Endothelial cell of umbilical vein (primary cell): ENCODE measurements at regions of chr17 and their contacts with region 1.

Region 1: DNA sequence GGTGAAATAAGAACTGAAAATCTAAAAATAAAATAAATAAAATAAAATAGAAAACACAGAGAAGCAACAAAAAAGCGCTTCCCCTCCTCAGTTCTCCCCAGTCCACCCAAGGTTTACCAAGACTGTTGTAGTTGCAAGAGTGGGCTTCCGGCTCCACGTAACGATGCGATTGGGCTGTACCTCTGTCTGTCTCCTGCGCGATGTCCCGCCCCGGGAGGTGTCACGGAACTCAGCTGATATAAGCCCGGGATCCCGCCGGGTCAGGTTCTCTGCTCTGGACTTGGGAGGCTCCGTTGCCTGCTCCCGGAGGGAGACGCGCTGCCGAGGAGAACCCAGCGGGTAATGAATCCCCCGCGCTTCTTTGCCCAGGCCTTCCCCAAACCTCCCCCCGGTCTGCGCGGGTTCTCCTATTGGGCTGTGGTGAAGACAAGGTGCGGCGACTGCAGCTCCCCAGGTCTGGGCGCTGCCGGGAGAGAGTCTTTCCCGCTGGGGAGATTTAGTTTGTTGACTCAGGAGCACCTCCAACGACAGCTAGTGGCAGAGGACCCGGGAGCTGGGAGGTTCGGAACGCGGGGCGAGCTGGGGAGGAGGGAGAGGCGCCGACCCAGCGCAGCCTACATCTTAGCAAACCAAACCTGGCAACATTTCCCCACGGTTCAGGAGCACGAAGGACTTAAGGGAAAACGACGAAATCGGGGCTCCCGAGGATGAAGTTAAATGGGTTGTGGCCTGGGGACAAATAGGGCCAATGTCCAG is at the start of gene SLFN5:
- DNase-seq: peak; percentile 95
- H3K4me3 ChIP-seq: peak within 1 kb of the TSS; percentile 52 to 68 (median 58)
- H3K27ac ChIP-seq: peak within 1 kb of the TSS; percentile 82
- H3K4me1 ChIP-seq: peaks cover 27% of the 10 kb centered on the region
- H3K27me3 ChIP-seq: peaks cover 0 to 6% of the 10 kb centered on the region in 2 experiments
- CTCF ChIP-seq: no peak
- POLR2A ChIP-seq: peak; percentile 98
- total RNA-seq, gene SLFN5: 15.7 and 24.2 TPM in 2 replicates

Region 2: GRCh38 chr17:34254651-34255380 is 988.2 kb before region 1 on chr17 and contains the start of gene CCL2:
- CTCF ChIA-PET with region 1: no interaction called
- POLR2A ChIA-PET with region 1: no interaction called
- dilution Hi-C with region 1: no loop called
- intact Hi-C with region 1: loop called (anchors 10 kb)
- DNase-seq: peak; percentile 92
- H3K4me3 ChIP-seq: peak within 1 kb of the TSS in 2 of 3 experiments; percentile 43 to 46
- H3K27ac ChIP-seq: peak within 1 kb of the TSS; percentile 96
- H3K4me1 ChIP-seq: peaks cover 78% of the 10 kb centered on the region
- H3K27me3 ChIP-seq: no peaks in the 10 kb centered on the region
- CTCF ChIP-seq: no peak
- POLR2A ChIP-seq: no peak
- total RNA-seq, gene CCL2: 160 and 238 TPM in 2 replicates

Region 3: GRCh38 chr17:35103271-35103670 is 139.7 kb before region 1 on chr17:
- CTCF ChIA-PET with region 1: no interaction called
- POLR2A ChIA-PET with region 1: no interaction called
- dilution Hi-C with region 1: no loop called
- intact Hi-C with region 1: no loop called
- DNase-seq: no peak
- H3K4me3 ChIP-seq: no peak overlapping the region
- H3K27ac ChIP-seq: no peak overlapping the region
- H3K4me1 ChIP-seq: no peaks in the 10 kb centered on the region
- H3K27me3 ChIP-seq: no peaks in the 10 kb centered on the region
- CTCF ChIP-seq: no peak
- POLR2A ChIP-seq: no peak

Region 4: GRCh38 chr17:35141681-35142466 is 101.1 kb before region 1 on chr17 and contains the start of gene NLE1:
- CTCF ChIA-PET with region 1: no interaction called
- POLR2A ChIA-PET with region 1: no interaction called
- dilution Hi-C with region 1: no loop called
- intact Hi-C with region 1: loop called (anchors 5 kb)
- DNase-seq: peak; percentile 80
- H3K4me3 ChIP-seq: peak within 1 kb of the TSS; percentile 77 to 91 (median 79)
- H3K27ac ChIP-seq: no peak within 1 kb of the TSS
- H3K4me1 ChIP-seq: peaks cover 6% of the 10 kb centered on the region
- H3K27me3 ChIP-seq: peaks cover 0 to 2% of the 10 kb centered on the region in 2 experiments
- CTCF ChIP-seq: peak; percentile 95 to 96
- POLR2A ChIP-seq: peak; percentile 73
- total RNA-seq, gene NLE1: 15.8 and 22.8 TPM in 2 replicates

Region 5: GRCh38 chr17:35254107-35254802 is 11.3 kb after region 1 on chr17:
- CTCF ChIA-PET with region 1: interaction called, 10 read pairs
- POLR2A ChIA-PET with region 1: interaction called, 37 read pairs
- dilution Hi-C with region 1: no loop called
- intact Hi-C with region 1: loop called (anchors 1 kb)
- DNase-seq: peak; percentile 98
- H3K4me3 ChIP-seq: no peak overlapping the region
- H3K27ac ChIP-seq: peak overlapping the region; percentile 59
- H3K4me1 ChIP-seq: peaks cover 35% of the 10 kb centered on the region
- H3K27me3 ChIP-seq: no peaks in the 10 kb centered on the region
- CTCF ChIP-seq: no peak
- POLR2A ChIP-seq: no peak

Region 6: DNA sequence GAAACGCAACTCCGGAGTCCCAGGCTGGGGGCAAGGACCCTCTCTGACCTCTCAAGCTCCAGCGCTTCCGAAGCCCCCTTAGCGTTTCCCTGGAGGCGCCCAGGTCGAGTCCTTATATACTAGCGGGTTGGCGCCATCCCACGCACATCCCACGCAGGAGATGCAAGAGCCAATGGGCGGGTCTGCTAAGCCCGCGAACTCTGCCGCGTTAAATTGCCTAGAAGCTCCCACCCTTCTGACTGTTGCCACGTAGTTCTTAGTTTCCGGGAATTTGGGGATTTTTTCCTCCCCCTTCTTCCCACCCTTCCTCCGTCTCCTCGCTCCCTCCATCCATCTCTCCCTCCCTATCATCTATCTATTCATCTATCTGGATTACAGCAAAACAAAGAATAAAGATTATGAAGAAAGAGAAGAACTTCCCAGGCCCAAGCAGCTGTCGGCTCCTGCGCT is 130.6 kb after region 1 on chr17 and contains the start of gene SLFN11:
- CTCF ChIA-PET with region 1: no interaction called
- POLR2A ChIA-PET with region 1: interaction called, 5 read pairs
- dilution Hi-C with region 1: no loop called
- intact Hi-C with region 1: loop called (anchors 1 kb)
- DNase-seq: peak; percentile 92
- H3K4me3 ChIP-seq: peak within 1 kb of the TSS; percentile 88 to 96 (median 90)
- H3K27ac ChIP-seq: peak within 1 kb of the TSS; percentile 98
- H3K4me1 ChIP-seq: peaks cover 21% of the 10 kb centered on the region
- H3K27me3 ChIP-seq: no peaks in the 10 kb centered on the region
- CTCF ChIP-seq: no peak
- POLR2A ChIP-seq: peak; percentile 97
- total RNA-seq, gene SLFN11: 95.0 and 110 TPM in 2 replicates

Region 7: GRCh38 chr17:35808962-35809854 is 566.2 kb after region 1 on chr17 and contains the start of gene TAF15:
- CTCF ChIA-PET with region 1: no interaction called
- POLR2A ChIA-PET with region 1: no interaction called
- dilution Hi-C with region 1: no loop called
- intact Hi-C with region 1: loop called (anchors 10 kb)
- DNase-seq: peak; percentile 98
- H3K4me3 ChIP-seq: peak within 1 kb of the TSS; percentile 56 to 96 (median 81)
- H3K27ac ChIP-seq: peak within 1 kb of the TSS; percentile 90
- H3K4me1 ChIP-seq: peaks cover 35% of the 10 kb centered on the region
- H3K27me3 ChIP-seq: no peaks in the 10 kb centered on the region
- CTCF ChIP-seq: peak; percentile 77 to 85
- POLR2A ChIP-seq: peak; percentile 98
- total RNA-seq, gene TAF15: 244 and 247 TPM in 2 replicates